ENCODE measurements at regions of chr15 and their contacts with region 1.

Region 1: DNA sequence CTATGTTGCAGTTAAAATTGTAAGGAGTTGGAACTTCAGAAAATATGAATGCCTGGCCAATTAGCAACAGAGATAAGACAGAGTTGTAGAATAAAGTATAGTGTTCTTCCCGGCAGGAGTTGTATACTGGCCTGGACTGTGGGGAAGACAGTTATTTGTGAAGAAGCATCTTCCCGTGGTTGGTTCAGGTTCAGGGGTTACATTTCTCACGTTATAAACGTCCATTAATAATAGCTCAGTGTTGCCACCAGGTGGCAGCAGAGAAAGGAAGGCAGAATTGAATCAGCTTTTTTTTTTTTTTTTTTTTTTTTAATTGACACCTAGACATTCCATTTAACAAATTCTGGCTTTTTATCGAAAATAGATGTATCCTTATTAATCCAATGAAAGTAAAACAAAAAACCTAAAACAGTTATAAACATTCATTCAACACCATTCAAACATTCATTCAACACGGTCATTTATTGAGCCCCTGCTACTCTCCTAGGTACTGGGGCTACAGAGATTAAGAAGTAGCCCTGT is 66.4 kb upstream of the NR2E3 start:
- DNase-seq: peak; percentile 55 to 73 (median 60)
- H3K4me3 ChIP-seq: no peak overlapping the region
- H3K27ac ChIP-seq: no peak overlapping the region
- H3K4me1 ChIP-seq: no peaks in the 10 kb centered on the region
- H3K27me3 ChIP-seq: no peaks in the 10 kb centered on the region
- CTCF ChIP-seq: peak; percentile 34 to 65 (median 47)
- EP300 ChIP-seq: no peak
- POLR2A ChIP-seq: no peak

Region 2: GRCh38 chr15:72155635-72156616 is 412.0 kb after region 1 on chr15:
- intact Hi-C with region 1: loop called in 3 of 4 experiments (anchors 2 to 10 kb)
- DNase-seq: peak; percentile 81 to 91 (median 89)
- H3K4me3 ChIP-seq: peak overlapping the region; percentile 43
- H3K27ac ChIP-seq: peak overlapping the region; percentile 39 to 55
- H3K4me1 ChIP-seq: peaks cover 4% of the 10 kb centered on the region
- H3K27me3 ChIP-seq: no peaks in the 10 kb centered on the region
- CTCF ChIP-seq: peak; percentile 67 to 84 (median 83)
- EP300 ChIP-seq: no peak
- POLR2A ChIP-seq: no peak

Region 3: GRCh38 chr15:72168111-72168808 is 424.3 kb after region 1 on chr15:
- intact Hi-C with region 1: loop called in 1 of 4 experiments (anchors 10 kb)
- DNase-seq: peak in 1 of 5 donors; percentile 57
- H3K4me3 ChIP-seq: no peak overlapping the region
- H3K27ac ChIP-seq: no peak overlapping the region
- H3K4me1 ChIP-seq: no peaks in the 10 kb centered on the region
- H3K27me3 ChIP-seq: no peaks in the 10 kb centered on the region
- CTCF ChIP-seq: no peak
- EP300 ChIP-seq: no peak
- POLR2A ChIP-seq: no peak

Measured in ovary (tissue), 10 donors.